ENCODE measurements at regions of chr2 and their contacts with region 1.

Region 1: GRCh38 chr2:226721541-226721940 is 78.1 kb downstream of the IRS1 start:
- DNase-seq: peak; percentile 64
- H3K4me3 ChIP-seq: no peak overlapping the region
- H3K27ac ChIP-seq: no peak overlapping the region
- H3K4me1 ChIP-seq: peaks cover 0 to 31% (median 20%) of the 10 kb centered on the region in 4 donors
- H3K27me3 ChIP-seq: no peaks in the 10 kb centered on the region
- CTCF ChIP-seq: no peak
- EP300 ChIP-seq: no peak
- POLR2A ChIP-seq: no peak

Region 2: DNA sequence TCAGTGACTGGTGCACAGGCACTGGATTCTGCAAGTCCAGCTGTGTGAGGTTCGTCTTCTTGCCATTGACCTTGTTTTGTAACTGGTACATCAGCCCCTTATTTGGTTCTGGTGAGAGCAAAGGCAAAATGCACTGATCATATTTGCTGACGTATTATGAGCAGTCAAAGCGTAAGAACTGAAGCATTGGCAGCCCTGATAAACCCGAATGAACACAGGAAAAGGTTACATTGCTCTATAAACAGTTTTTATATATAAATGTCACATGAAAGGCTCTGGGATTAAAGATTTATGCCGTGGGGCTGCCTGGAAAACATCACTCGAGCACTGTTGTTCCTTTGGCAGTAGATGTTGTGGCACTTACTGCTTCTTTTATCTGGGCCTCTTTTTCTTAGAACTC is 89.9 kb before region 1 on chr2:
- intact Hi-C with region 1: loop called (anchors 5 kb)
- DNase-seq: peak; percentile 90
- H3K4me3 ChIP-seq: no peak overlapping the region
- H3K27ac ChIP-seq: peak overlapping the region; percentile 39 to 84 (median 82)
- H3K4me1 ChIP-seq: peaks cover 0 to 29% (median 22%) of the 10 kb centered on the region in 4 donors
- H3K27me3 ChIP-seq: no peaks in the 10 kb centered on the region
- CTCF ChIP-seq: no peak
- EP300 ChIP-seq: peak; percentile 98 to 100 (median 98)
- POLR2A ChIP-seq: no peak

Region 3: DNA sequence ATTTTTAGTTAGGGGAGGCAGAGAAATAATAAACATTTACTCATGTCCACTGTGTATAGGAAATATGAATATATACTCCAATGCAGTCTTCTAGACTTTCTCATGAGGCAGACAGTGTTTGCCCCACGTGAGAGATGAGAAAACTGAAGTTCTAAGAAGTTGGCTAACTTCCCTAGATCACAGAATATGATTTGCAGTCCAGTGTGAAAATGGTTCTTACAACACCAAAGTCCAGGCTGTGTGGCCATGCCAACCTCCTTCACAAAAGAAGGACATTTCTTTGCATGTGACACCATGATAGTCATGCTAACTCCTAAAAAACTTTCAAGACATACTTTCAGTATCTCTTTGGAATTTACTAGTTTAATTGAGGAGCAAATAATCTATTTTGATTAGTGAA is 65.7 kb before region 1 on chr2:
- intact Hi-C with region 1: loop called (anchors 5 kb)
- DNase-seq: no peak
- H3K4me3 ChIP-seq: no peak overlapping the region
- H3K27ac ChIP-seq: peak overlapping the region in 2 of 4 donors; percentile 16 to 26
- H3K4me1 ChIP-seq: peaks cover 0 to 34% (median 9%) of the 10 kb centered on the region in 4 donors
- H3K27me3 ChIP-seq: no peaks in the 10 kb centered on the region
- CTCF ChIP-seq: no peak
- EP300 ChIP-seq: no peak
- POLR2A ChIP-seq: no peak